B cell (primary cell): ENCODE measurements at regions of chr15 and their contacts with region 1.

Region 1: DNA sequence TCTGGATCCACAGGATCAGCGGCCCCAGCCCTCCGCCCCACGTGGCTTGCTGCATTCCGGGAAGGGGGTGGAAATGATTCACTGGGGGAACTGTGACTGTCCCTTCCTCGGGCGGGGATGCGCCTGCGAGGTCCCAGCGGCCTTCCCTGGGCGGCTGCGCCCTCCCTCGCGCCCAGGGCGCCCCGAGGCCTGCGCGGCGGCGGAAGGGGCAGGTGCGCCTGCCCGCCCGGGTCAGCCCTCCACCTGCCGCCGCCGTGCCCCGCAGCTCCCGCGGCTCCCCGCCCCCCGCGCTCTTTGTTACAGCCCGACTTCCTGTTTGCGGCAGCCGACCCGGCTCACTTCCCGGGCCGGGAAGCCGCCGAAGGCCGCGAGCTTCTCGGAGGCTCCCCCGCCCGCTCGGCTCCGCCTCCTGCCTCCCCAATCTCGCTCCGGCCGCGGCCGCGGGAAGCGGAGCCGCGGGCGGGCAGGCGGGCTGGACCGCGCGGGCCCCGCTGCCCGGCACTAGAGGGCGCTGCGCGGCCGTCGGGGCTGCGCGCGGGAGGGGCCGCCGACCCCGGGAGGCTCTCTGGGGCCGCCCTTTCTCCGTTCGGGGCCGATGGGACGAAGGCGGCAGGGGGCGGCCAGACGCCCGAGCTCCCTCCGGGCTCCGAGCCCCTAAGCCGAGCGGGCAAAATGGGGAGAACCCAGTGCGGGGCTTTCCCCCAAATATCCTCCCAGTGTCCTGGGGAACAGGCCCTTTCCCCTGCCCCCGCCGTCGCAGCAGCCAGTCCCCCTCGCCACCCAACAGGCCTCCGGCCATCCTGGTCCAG is 11.5 kb upstream of the CHAC1 start:
- DNase-seq: peak; percentile 82
- ATAC-seq: peak; percentile 85
- H3K4me3 ChIP-seq: peak overlapping the region; percentile 53 to 78 (median 69)
- H3K4me3 Mint-ChIP-seq: peak overlapping the region; percentile 83
- H3K27ac ChIP-seq: peak overlapping the region in 1 of 2 donors; percentile 37
- H3K27ac Mint-ChIP-seq: peak overlapping the region; percentile 75
- H3K4me1 ChIP-seq: peaks cover 31 to 35% of the 10 kb centered on the region in 2 donors
- H3K4me1 Mint-ChIP-seq: peaks cover 40% of the 10 kb centered on the region
- H3K27me3 ChIP-seq: no peaks in the 10 kb centered on the region
- H3K27me3 Mint-ChIP-seq: peaks cover 5% of the 10 kb centered on the region
- CTCF ChIP-seq: peak; percentile 66

Region 2: DNA sequence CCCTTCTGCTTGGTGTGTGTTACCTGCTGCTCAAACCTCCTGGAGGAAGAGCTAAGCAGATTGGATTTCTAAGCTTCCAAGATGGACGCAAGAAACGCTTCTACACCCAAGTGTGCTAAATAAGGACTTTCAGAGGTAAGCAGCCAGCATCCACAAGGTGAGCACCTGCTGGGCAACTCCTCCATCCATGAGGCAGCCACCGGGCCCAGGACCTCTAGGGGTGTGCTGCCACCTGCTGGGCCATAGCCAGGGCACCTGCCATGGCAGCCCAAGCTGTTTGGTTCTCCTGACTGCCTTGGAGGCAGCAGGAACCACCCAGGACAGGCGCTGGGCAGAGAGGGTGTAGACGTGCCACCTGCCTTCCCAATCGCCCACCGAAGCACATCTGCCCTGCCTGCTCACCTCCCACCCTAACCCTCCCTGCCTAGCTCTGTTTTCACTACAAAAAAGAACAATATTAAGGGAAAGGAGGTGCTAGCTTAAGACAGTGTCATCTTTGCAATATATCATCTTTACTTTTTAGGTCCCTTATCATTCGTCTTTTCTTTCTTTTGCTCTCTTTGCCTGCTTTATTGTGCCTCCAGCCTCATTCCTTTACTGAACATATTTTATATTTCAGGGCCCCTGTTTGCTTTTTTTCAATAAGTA is 159.0 kb before region 1 on chr15:
- CTCF ChIA-PET with region 1: no interaction called
- POLR2A ChIA-PET with region 1: no interaction called
- intact Hi-C with region 1: no loop called
- DNase-seq: peak; percentile 84
- ATAC-seq: peak; percentile 98
- H3K4me3 ChIP-seq: no peak overlapping the region
- H3K4me3 Mint-ChIP-seq: no peak overlapping the region
- H3K27ac ChIP-seq: no peak overlapping the region
- H3K27ac Mint-ChIP-seq: peak overlapping the region; percentile 43
- H3K4me1 ChIP-seq: peaks cover 7% of the 10 kb centered on the region in 2 donors
- H3K4me1 Mint-ChIP-seq: peaks cover 16% of the 10 kb centered on the region
- H3K27me3 ChIP-seq: no peaks in the 10 kb centered on the region
- H3K27me3 Mint-ChIP-seq: no peaks in the 10 kb centered on the region
- CTCF ChIP-seq: peak; percentile 90

Region 3: GRCh38 chr15:40928821-40929659 is 12.7 kb before region 1 on chr15 and contains the start of gene DLL4:
- CTCF ChIA-PET with region 1: interaction called, 67 read pairs
- POLR2A ChIA-PET with region 1: interaction called, 3 read pairs
- intact Hi-C with region 1: loop called (anchors 2 kb)
- DNase-seq: peak; percentile 66
- ATAC-seq: peak; percentile 35
- H3K4me3 ChIP-seq: peak within 1 kb of the TSS in 4 of 5 experiments; percentile 31 to 60 (median 48)
- H3K4me3 Mint-ChIP-seq: peak within 1 kb of the TSS; percentile 84
- H3K27ac ChIP-seq: no peak within 1 kb of the TSS
- H3K27ac Mint-ChIP-seq: peak within 1 kb of the TSS; percentile 53
- H3K4me1 ChIP-seq: peaks cover 57 to 65% of the 10 kb centered on the region in 2 donors
- H3K4me1 Mint-ChIP-seq: peaks cover 47% of the 10 kb centered on the region
- H3K27me3 ChIP-seq: peaks cover 0 to 88% (median 53%) of the 10 kb centered on the region in 4 experiments
- H3K27me3 Mint-ChIP-seq: peaks cover 68% of the 10 kb centered on the region
- CTCF ChIP-seq: no peak
- total RNA-seq, gene DLL4: 0.30 and 0.36 TPM in 2 replicates

Region 4: DNA sequence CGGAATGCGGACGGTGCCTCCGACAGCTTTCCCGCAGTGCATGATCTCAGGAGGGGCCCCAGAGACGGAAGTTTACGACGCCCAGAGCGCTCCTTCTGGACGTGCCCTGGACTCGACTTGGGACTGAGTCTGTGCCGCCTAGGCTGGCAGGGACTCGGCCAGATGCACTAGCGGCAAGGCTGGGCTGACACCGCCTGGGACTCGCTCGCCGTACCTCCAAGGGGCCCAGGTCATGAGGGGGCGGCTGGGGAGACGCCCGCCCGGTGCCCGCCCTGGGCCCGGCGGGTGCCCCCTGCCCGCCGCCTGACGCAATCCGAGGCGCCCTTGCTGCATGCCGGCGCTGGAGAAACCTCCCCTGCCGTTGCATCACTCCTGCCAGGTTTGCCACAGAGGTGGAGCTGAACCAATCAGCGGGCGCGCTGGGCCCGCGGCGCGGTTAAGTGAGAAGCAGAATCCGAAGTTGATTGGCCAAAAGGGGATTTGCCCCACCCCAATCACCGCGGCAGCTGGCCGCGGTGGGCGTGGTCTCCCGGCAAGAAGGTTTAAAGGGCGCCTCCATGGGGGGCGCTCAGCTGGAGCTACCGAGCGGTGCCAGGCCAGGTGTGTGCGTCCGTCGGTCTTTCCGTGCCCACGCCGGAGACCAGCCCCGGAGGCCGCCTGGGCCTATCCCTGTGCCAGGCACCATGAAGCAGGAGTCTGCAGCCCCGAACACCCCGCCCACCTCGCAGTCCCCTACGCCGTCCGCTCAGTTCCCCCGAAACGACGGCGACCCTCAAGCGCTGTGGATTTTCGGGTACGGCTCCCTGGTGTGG is 11.4 kb after region 1 on chr15 and contains the start of gene CHAC1:
- CTCF ChIA-PET with region 1: interaction called, 49 read pairs
- POLR2A ChIA-PET with region 1: interaction called, 20 read pairs
- intact Hi-C with region 1: loop called (anchors 1 kb)
- DNase-seq: peak; percentile 95
- ATAC-seq: peak; percentile 97
- H3K4me3 ChIP-seq: peak within 1 kb of the TSS; percentile 40 to 74 (median 64)
- H3K4me3 Mint-ChIP-seq: peak within 1 kb of the TSS; percentile 93
- H3K27ac ChIP-seq: peak within 1 kb of the TSS in 1 of 2 donors; percentile 25
- H3K27ac Mint-ChIP-seq: peak within 1 kb of the TSS; percentile 84
- H3K4me1 ChIP-seq: peaks cover 9 to 14% of the 10 kb centered on the region in 2 donors
- H3K4me1 Mint-ChIP-seq: peaks cover 18% of the 10 kb centered on the region
- H3K27me3 ChIP-seq: peaks cover 0 to 14% (median 2%) of the 10 kb centered on the region in 4 experiments
- H3K27me3 Mint-ChIP-seq: peaks cover 9% of the 10 kb centered on the region
- CTCF ChIP-seq: no peak
- total RNA-seq, gene CHAC1: 3.1 and 3.6 TPM in 2 replicates

Region 5: DNA sequence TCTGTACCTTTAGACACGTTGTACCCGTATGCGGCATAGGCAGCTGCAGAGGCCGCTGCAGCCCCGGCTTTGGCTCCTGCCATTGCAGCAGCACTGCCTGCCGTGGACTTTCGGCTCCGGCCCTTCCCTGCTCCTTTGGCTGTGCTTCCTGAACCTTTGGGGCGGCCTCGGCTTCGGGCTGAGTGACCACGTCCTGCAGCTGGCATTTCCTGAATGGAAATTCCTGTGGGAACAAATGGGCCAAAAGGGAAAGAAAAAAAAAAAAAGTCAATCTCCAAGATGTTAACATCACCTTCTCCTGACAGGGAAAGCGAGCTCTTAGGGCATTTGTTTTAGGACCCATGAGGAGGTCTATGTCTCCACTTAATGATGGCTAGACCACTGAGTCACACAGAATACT is 41.1 kb after region 1 on chr15:
- CTCF ChIA-PET with region 1: interaction called, 16 read pairs
- POLR2A ChIA-PET with region 1: no interaction called
- intact Hi-C with region 1: no loop called
- DNase-seq: no peak
- ATAC-seq: no peak
- H3K4me3 ChIP-seq: no peak overlapping the region
- H3K4me3 Mint-ChIP-seq: no peak overlapping the region
- H3K27ac ChIP-seq: no peak overlapping the region
- H3K27ac Mint-ChIP-seq: no peak overlapping the region
- H3K4me1 ChIP-seq: no peaks in the 10 kb centered on the region
- H3K4me1 Mint-ChIP-seq: no peaks in the 10 kb centered on the region
- H3K27me3 ChIP-seq: no peaks in the 10 kb centered on the region
- H3K27me3 Mint-ChIP-seq: no peaks in the 10 kb centered on the region
- CTCF ChIP-seq: no peak

Region 6: GRCh38 chr15:41022487-41023090 is 80.9 kb after region 1 on chr15:
- CTCF ChIA-PET with region 1: interaction called, 9 read pairs
- POLR2A ChIA-PET with region 1: no interaction called
- intact Hi-C with region 1: loop called (anchors 5 kb)
- DNase-seq: peak; percentile 64
- ATAC-seq: peak; percentile 63
- H3K4me3 ChIP-seq: no peak overlapping the region
- H3K4me3 Mint-ChIP-seq: no peak overlapping the region
- H3K27ac ChIP-seq: no peak overlapping the region
- H3K27ac Mint-ChIP-seq: no peak overlapping the region
- H3K4me1 ChIP-seq: no peaks in the 10 kb centered on the region
- H3K4me1 Mint-ChIP-seq: no peaks in the 10 kb centered on the region
- H3K27me3 ChIP-seq: no peaks in the 10 kb centered on the region
- H3K27me3 Mint-ChIP-seq: no peaks in the 10 kb centered on the region
- CTCF ChIP-seq: peak; percentile 74